ENCODE measurements at regions of chr18 and their contacts with region 1.

Region 1: GRCh38 chr18:57859314-57859713 is 56.2 kb upstream of the ATP8B1 start:
- DNase-seq: peak; percentile 61
- H3K4me3 ChIP-seq: no peak overlapping the region
- H3K27ac ChIP-seq: peak overlapping the region; percentile 91
- H3K4me1 ChIP-seq: peaks cover 37% of the 10 kb centered on the region
- H3K27me3 ChIP-seq: no peaks in the 10 kb centered on the region
- CTCF ChIP-seq: peak; percentile 54

Region 2: GRCh38 chr18:57175550-57175949 is 683.8 kb before region 1 on chr18:
- CTCF ChIA-PET with region 1: no interaction called
- POLR2A ChIA-PET with region 1: no interaction called
- intact Hi-C with region 1: no loop called
- DNase-seq: no peak
- H3K4me3 ChIP-seq: no peak overlapping the region
- H3K27ac ChIP-seq: no peak overlapping the region
- H3K4me1 ChIP-seq: no peaks in the 10 kb centered on the region
- H3K27me3 ChIP-seq: no peaks in the 10 kb centered on the region
- CTCF ChIP-seq: no peak

Region 3: GRCh38 chr18:57561728-57562423 is 297.4 kb before region 1 on chr18:
- CTCF ChIA-PET with region 1: no interaction called
- POLR2A ChIA-PET with region 1: no interaction called
- intact Hi-C with region 1: loop called (anchors 10 kb)
- DNase-seq: peak; percentile 74
- H3K4me3 ChIP-seq: no peak overlapping the region
- H3K27ac ChIP-seq: no peak overlapping the region
- H3K4me1 ChIP-seq: peaks cover 6% of the 10 kb centered on the region
- H3K27me3 ChIP-seq: no peaks in the 10 kb centered on the region
- CTCF ChIP-seq: peak; percentile 89

Region 4: GRCh38 chr18:57630002-57630753 is 229.1 kb before region 1 on chr18:
- CTCF ChIA-PET with region 1: no interaction called
- POLR2A ChIA-PET with region 1: no interaction called
- intact Hi-C with region 1: loop called (anchors 2 kb)
- DNase-seq: peak; percentile 98
- H3K4me3 ChIP-seq: peak overlapping the region; percentile 60
- H3K27ac ChIP-seq: peak overlapping the region; percentile 80
- H3K4me1 ChIP-seq: peaks cover 25% of the 10 kb centered on the region
- H3K27me3 ChIP-seq: no peaks in the 10 kb centered on the region
- CTCF ChIP-seq: peak; percentile 89

Region 5: DNA sequence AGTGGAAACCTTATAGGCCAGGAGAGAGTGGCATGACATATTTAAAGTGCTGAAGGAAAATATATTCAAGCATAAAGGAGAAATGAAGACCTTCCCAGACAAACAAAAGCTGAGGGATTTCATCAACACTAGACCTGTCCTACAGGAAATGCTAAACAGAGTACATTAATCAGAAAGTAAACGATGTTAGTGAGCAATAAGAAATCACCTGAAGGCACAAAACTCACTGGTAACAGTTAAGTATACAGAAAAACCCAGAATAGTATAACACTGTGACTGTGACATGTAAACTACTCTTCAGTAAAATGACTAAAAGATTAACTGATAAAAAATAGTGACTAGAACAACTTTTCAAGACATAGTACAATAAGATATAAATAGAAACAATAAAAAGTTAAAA is 143.6 kb before region 1 on chr18:
- CTCF ChIA-PET with region 1: no interaction called
- POLR2A ChIA-PET with region 1: interaction called, 3 read pairs
- intact Hi-C with region 1: loop called (anchors 2 kb)
- DNase-seq: no peak
- H3K4me3 ChIP-seq: no peak overlapping the region
- H3K27ac ChIP-seq: no peak overlapping the region
- H3K4me1 ChIP-seq: peaks cover 11% of the 10 kb centered on the region
- H3K27me3 ChIP-seq: no peaks in the 10 kb centered on the region
- CTCF ChIP-seq: no peak

Region 6: GRCh38 chr18:57789090-57789489 is 70.2 kb before region 1 on chr18:
- CTCF ChIA-PET with region 1: no interaction called
- POLR2A ChIA-PET with region 1: interaction called, 4 read pairs
- intact Hi-C with region 1: loop called (anchors 5 kb)
- DNase-seq: no peak
- H3K4me3 ChIP-seq: peak overlapping the region; percentile 18
- H3K27ac ChIP-seq: peak overlapping the region; percentile 97
- H3K4me1 ChIP-seq: peaks cover 75% of the 10 kb centered on the region
- H3K27me3 ChIP-seq: no peaks in the 10 kb centered on the region
- CTCF ChIP-seq: no peak

Region 7: DNA sequence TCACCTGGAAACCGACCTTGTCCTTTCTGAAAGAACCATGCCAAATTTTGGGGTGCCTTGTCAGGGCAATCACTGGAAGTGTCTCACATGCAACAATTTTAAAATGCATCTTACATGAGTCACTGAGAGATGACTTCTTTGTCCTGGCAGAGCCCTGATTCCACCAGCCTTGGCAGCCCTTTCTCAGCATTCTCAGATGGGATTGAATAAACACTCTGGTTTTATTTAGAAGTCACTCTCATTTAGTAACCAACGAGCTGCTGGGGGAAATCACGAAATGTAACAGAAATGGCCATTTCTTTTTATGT is 52.4 kb before region 1 on chr18:
- CTCF ChIA-PET with region 1: no interaction called
- POLR2A ChIA-PET with region 1: no interaction called
- intact Hi-C with region 1: loop called (anchors 5 kb)
- DNase-seq: peak; percentile 50
- H3K4me3 ChIP-seq: no peak overlapping the region
- H3K27ac ChIP-seq: peak overlapping the region; percentile 57
- H3K4me1 ChIP-seq: peaks cover 34% of the 10 kb centered on the region
- H3K27me3 ChIP-seq: no peaks in the 10 kb centered on the region
- CTCF ChIP-seq: no peak

Region 8: GRCh38 chr18:58362027-58362575 is 502.8 kb after region 1 on chr18:
- CTCF ChIA-PET with region 1: no interaction called
- POLR2A ChIA-PET with region 1: no interaction called
- intact Hi-C with region 1: no loop called
- DNase-seq: peak; percentile 90
- H3K4me3 ChIP-seq: no peak overlapping the region
- H3K27ac ChIP-seq: peak overlapping the region; percentile 62
- H3K4me1 ChIP-seq: peaks cover 21% of the 10 kb centered on the region
- H3K27me3 ChIP-seq: no peaks in the 10 kb centered on the region
- CTCF ChIP-seq: no peak

Measured in A673 (cell line).